Left ventricle myocardium inferior (tissue), 1 donor: ENCODE measurements at regions of chr12 and their contacts with region 1.

Region 1: GRCh38 chr12:27733052-27733656 is 22.5 kb downstream of the MRPS35 start:
- DNase-seq: no peak
- H3K4me3 ChIP-seq: no peak overlapping the region
- H3K27ac ChIP-seq: no peak overlapping the region
- H3K4me1 ChIP-seq: no peaks in the 10 kb centered on the region
- H3K27me3 ChIP-seq: no peaks in the 10 kb centered on the region
- CTCF ChIP-seq: peak; percentile 82

Region 2: GRCh38 chr12:27821259-27821973 is 88.3 kb after region 1 on chr12:
- intact Hi-C with region 1: loop called (anchors 5 kb)
- DNase-seq: no peak
- H3K4me3 ChIP-seq: no peak overlapping the region
- H3K27ac ChIP-seq: no peak overlapping the region
- H3K4me1 ChIP-seq: peaks cover 10% of the 10 kb centered on the region
- H3K27me3 ChIP-seq: peaks cover 19% of the 10 kb centered on the region
- CTCF ChIP-seq: peak; percentile 85

Region 3: GRCh38 chr12:27861428-27862167 is 128.4 kb after region 1 on chr12:
- intact Hi-C with region 1: no loop called
- DNase-seq: peak; percentile 72
- H3K4me3 ChIP-seq: no peak overlapping the region
- H3K27ac ChIP-seq: peak overlapping the region; percentile 52
- H3K4me1 ChIP-seq: peaks cover 9% of the 10 kb centered on the region
- H3K27me3 ChIP-seq: peaks cover 8% of the 10 kb centered on the region
- CTCF ChIP-seq: no peak

Region 4: GRCh38 chr12:27940756-27941402 is 207.7 kb after region 1 on chr12:
- intact Hi-C with region 1: loop called (anchors 10 kb)
- DNase-seq: peak; percentile 69
- H3K4me3 ChIP-seq: no peak overlapping the region
- H3K27ac ChIP-seq: no peak overlapping the region
- H3K4me1 ChIP-seq: no peaks in the 10 kb centered on the region
- H3K27me3 ChIP-seq: no peaks in the 10 kb centered on the region
- CTCF ChIP-seq: peak; percentile 89

Region 5: GRCh38 chr12:27965411-27965810 is 232.3 kb after region 1 on chr12:
- intact Hi-C with region 1: no loop called
- DNase-seq: no peak
- H3K4me3 ChIP-seq: no peak overlapping the region
- H3K27ac ChIP-seq: no peak overlapping the region
- H3K4me1 ChIP-seq: peaks cover 26% of the 10 kb centered on the region
- H3K27me3 ChIP-seq: peaks cover 85% of the 10 kb centered on the region
- CTCF ChIP-seq: no peak